Heart left ventricle (tissue), 16 donors: ENCODE measurements at regions of chrX and their contacts with region 1.

Region 1: DNA sequence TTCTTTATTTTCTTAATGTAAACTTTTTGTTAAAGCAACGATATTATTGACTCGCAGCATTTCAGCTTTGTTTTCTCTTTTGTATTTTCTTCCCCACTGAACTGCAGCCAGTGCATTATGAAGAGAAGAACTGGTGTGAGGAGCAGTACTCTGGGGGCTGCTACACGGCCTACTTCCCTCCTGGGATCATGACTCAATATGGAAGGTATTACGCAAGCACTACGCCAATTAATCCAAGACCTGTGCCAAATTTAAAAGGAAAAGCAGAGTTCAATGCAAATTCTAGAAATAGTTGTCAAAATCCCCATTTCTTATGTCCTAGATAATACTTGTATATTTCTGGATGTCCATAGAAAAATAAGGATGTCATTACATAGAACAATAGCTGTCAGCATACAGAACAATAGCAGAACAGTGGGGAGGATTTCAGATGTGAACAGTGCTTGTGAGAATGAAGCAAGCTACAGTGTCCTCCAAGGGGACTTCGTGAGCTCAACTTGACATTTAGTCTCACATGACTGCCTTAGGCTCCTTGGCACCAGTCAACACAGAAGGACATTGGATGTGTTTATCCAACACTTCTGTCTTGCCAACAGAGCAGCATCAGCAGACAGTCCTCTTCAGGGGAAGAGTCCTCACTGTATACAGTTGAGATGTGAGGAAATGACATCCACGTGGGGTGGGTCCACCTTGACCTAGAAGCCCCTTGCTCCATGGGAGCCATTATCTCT is 85.9 kb downstream of the MAOA start:
- DNase-seq: peak in 1 of 5 donors; percentile 20
- ATAC-seq: peak; percentile 75 to 87 (median 82)
- H3K4me3 ChIP-seq: no peak overlapping the region
- H3K27ac ChIP-seq: peak overlapping the region in 11 of 12 donors; percentile 24 to 69 (median 47)
- H3K4me1 ChIP-seq: peaks cover 0 to 24% (median 8%) of the 10 kb centered on the region in 12 donors
- H3K27me3 ChIP-seq: peaks cover 0 to 12% (median 0%) of the 10 kb centered on the region in 9 donors
- CTCF ChIP-seq: no peak
- POLR2A ChIP-seq: no peak

Region 2: GRCh38 chrX:41781502-41781901 is 1960.5 kb before region 1 on chrX:
- intact Hi-C with region 1: loop called in 1 of 10 experiments (anchors 10 kb)
- DNase-seq: no peak
- ATAC-seq: peak in 2 of 4 donors; percentile 39 to 62
- H3K4me3 ChIP-seq: no peak overlapping the region
- H3K27ac ChIP-seq: no peak overlapping the region
- H3K4me1 ChIP-seq: peaks cover 0 to 10% (median 0%) of the 10 kb centered on the region in 12 donors
- H3K27me3 ChIP-seq: peaks cover 0 to 4% (median 0%) of the 10 kb centered on the region in 9 donors
- CTCF ChIP-seq: peak; percentile 42 to 71 (median 55)
- POLR2A ChIP-seq: no peak

Region 3: DNA sequence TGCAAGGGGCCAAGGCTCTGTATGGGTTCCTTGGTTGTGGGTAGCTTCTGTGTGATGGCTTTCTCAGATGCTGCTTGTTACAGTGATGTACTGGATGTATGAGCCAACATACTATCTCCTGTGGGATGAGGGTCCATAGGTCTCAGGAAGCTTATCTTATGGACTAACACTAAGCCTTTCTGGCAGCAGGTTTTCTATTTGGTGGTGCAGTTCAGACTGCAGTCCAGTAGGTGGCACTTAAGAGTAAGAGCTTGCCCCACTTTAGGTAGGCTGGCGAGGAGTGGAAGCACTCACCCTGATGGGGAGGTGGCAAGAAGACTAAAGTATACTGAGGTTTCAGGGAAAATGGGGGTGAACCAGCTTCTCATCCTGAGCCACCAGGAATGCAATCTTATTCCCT is 392.6 kb before region 1 on chrX:
- intact Hi-C with region 1: loop called in 1 of 10 experiments (anchors 10 kb)
- DNase-seq: peak in 1 of 5 donors; percentile 3
- ATAC-seq: peak in 1 of 4 donors; percentile 56
- H3K4me3 ChIP-seq: no peak overlapping the region
- H3K27ac ChIP-seq: no peak overlapping the region
- H3K4me1 ChIP-seq: no peaks in the 10 kb centered on the region
- H3K27me3 ChIP-seq: peaks cover 0 to 24% (median 0%) of the 10 kb centered on the region in 9 donors
- CTCF ChIP-seq: peak; percentile 7 to 65 (median 36)
- POLR2A ChIP-seq: no peak

Region 4: GRCh38 chrX:43654431-43655150 is 87.4 kb before region 1 on chrX:
- intact Hi-C with region 1: loop called in 8 of 10 experiments (anchors 2 to 10 kb)
- DNase-seq: peak; percentile 91 to 95 (median 94)
- ATAC-seq: peak; percentile 94 to 98 (median 97)
- H3K4me3 ChIP-seq: peak overlapping the region; percentile 43 to 98 (median 76)
- H3K27ac ChIP-seq: peak overlapping the region; percentile 81 to 95 (median 88)
- H3K4me1 ChIP-seq: peaks cover 0 to 6% (median 0%) of the 10 kb centered on the region in 12 donors
- H3K27me3 ChIP-seq: peaks cover 0 to 17% (median 0%) of the 10 kb centered on the region in 9 donors
- CTCF ChIP-seq: peak in 10 of 12 donors; percentile 11 to 53 (median 31)
- POLR2A ChIP-seq: peak in 1 of 2 donors; percentile 95